Activated T-helper 2 cell treated with anti-CD3 and anti-CD28 coated beads, Interferon-gamma antibody, Interleukin-2, Interleukin-4, amounts not matched to agents 10 μg/mL and 5 μg/mL and 100 μg/mL, durations not matched to agents 14 hours and 24 hours and 36 hours (primary cell): ENCODE measurements at regions of chr2 and their contacts with region 1.

Region 1: DNA sequence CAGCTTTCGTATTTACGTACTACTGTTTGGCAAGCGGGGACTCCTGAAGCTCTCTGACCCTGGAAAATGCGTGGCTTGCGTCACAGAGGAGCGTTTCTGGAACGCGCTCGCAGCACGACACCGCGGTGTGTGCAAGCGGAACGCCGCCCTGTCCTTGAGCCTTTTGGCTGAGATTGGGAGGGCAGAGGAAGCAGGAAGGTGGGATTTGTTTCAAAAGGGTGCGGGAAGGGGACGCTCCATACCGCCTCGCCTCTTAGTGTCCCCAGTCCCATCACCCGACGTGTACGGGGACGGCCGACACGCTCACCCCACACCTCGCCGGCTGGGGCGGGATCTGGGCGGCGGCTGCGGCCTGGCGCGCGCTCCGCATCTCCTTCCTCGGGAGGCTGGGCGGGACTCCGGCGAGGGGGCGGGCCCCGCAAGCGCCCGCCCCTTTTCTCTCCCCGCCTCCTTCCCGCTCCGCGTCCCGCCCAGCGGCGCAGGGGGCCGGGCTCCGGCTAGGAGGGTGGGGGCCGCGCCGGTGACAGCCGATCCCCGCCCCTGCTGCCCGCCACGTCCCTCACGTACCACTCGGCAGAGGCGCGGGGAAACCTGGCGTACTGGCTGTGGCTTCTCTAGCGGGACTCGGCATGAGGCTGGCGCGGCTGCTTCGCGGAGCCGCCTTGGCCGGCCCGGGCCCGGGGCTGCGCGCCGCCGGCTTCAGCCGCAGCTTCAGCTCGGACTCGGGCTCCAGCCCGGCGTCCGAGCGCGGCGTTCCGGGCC is at the start of gene PDK1:
- DNase-seq: peak; percentile 89
- H3K4me3 Mint-ChIP-seq: peak within 1 kb of the TSS; percentile 93
- H3K27ac Mint-ChIP-seq: peak within 1 kb of the TSS; percentile 95
- H3K4me1 Mint-ChIP-seq: peaks cover 47% of the 10 kb centered on the region
- H3K27me3 Mint-ChIP-seq: peaks cover 7% of the 10 kb centered on the region
- total RNA-seq, gene PDK1: 38.9 and 44.9 TPM in 2 replicates

Region 2: GRCh38 chr2:170928824-170929685 is 1626.6 kb before region 1 on chr2 and contains the start of gene GORASP2:
- intact Hi-C with region 1: loop called (anchors 10 kb)
- DNase-seq: peak; percentile 98
- H3K4me3 Mint-ChIP-seq: peak within 1 kb of the TSS; percentile 92
- H3K27ac Mint-ChIP-seq: peak within 1 kb of the TSS; percentile 94
- H3K4me1 Mint-ChIP-seq: peaks cover 45% of the 10 kb centered on the region
- H3K27me3 Mint-ChIP-seq: no peaks in the 10 kb centered on the region
- total RNA-seq, gene GORASP2: 92.4 and 92.8 TPM in 2 replicates

Region 3: GRCh38 chr2:171687287-171688128 is 868.2 kb before region 1 on chr2 and contains the start of gene DYNC1I2:
- intact Hi-C with region 1: loop called (anchors 5 kb)
- DNase-seq: peak; percentile 72
- H3K4me3 Mint-ChIP-seq: peak within 1 kb of the TSS; percentile 81
- H3K27ac Mint-ChIP-seq: peak within 1 kb of the TSS; percentile 72
- H3K4me1 Mint-ChIP-seq: peaks cover 18% of the 10 kb centered on the region
- H3K27me3 Mint-ChIP-seq: peaks cover 19% of the 10 kb centered on the region
- total RNA-seq, gene DYNC1I2: 65.9 and 69.5 TPM in 2 replicates

Region 4: GRCh38 chr2:171754254-171754939 is 801.3 kb before region 1 on chr2:
- intact Hi-C with region 1: no loop called
- DNase-seq: no peak
- H3K4me3 Mint-ChIP-seq: no peak overlapping the region
- H3K27ac Mint-ChIP-seq: no peak overlapping the region
- H3K4me1 Mint-ChIP-seq: peaks cover 8% of the 10 kb centered on the region
- H3K27me3 Mint-ChIP-seq: no peaks in the 10 kb centered on the region

Region 5: DNA sequence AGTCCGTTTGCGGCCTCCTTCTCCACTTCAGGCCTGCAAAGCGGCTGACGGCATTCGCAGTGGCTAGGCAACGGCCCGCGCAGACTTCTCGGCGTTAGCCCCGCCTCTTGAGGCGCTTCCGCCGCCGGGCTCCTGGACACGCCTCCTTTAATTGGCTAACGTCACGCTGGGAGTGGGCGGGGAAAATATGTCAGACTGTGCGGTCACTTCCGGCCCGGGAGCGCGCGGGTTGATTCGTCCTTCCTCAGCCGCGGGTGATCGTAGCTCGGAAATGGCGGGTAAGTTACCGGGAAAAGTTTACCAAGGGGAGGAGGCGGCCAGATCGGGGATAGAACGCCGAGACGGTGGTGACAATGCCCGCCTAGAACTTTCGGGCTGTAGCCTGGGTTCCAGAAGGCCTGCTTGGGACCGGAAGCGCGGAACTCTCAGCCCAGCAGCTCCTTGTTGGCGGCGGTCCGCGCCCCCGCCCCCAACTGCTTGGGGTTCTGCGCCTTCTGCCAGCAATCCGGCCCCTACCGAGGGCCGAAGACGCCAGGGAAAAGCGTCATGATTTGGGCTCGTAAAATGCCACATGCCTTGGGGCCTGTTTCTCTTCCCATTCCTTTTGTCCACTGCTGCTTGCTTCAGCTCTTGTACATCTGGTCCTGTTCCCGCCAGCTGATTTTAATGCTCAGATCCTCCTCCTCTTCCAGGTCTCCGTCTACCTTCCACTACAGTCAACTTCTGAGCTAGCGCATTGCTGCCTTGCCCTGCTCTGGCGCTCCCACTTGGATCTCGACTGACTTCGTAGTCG is 633.3 kb before region 1 on chr2 and contains the start of gene HAT1:
- intact Hi-C with region 1: loop called (anchors 5 kb)
- DNase-seq: peak; percentile 97
- H3K4me3 Mint-ChIP-seq: peak within 1 kb of the TSS; percentile 94
- H3K27ac Mint-ChIP-seq: peak within 1 kb of the TSS; percentile 96
- H3K4me1 Mint-ChIP-seq: peaks cover 33% of the 10 kb centered on the region
- H3K27me3 Mint-ChIP-seq: peaks cover 2% of the 10 kb centered on the region
- total RNA-seq, gene HAT1: 67.4 and 70.1 TPM in 2 replicates

Region 6: GRCh38 chr2:172588931-172589330 is 33.2 kb after region 1 on chr2:
- intact Hi-C with region 1: loop called (anchors 2 kb)
- DNase-seq: no peak
- H3K4me3 Mint-ChIP-seq: no peak overlapping the region
- H3K27ac Mint-ChIP-seq: no peak overlapping the region
- H3K4me1 Mint-ChIP-seq: peaks cover 22% of the 10 kb centered on the region
- H3K27me3 Mint-ChIP-seq: no peaks in the 10 kb centered on the region

Region 7: DNA sequence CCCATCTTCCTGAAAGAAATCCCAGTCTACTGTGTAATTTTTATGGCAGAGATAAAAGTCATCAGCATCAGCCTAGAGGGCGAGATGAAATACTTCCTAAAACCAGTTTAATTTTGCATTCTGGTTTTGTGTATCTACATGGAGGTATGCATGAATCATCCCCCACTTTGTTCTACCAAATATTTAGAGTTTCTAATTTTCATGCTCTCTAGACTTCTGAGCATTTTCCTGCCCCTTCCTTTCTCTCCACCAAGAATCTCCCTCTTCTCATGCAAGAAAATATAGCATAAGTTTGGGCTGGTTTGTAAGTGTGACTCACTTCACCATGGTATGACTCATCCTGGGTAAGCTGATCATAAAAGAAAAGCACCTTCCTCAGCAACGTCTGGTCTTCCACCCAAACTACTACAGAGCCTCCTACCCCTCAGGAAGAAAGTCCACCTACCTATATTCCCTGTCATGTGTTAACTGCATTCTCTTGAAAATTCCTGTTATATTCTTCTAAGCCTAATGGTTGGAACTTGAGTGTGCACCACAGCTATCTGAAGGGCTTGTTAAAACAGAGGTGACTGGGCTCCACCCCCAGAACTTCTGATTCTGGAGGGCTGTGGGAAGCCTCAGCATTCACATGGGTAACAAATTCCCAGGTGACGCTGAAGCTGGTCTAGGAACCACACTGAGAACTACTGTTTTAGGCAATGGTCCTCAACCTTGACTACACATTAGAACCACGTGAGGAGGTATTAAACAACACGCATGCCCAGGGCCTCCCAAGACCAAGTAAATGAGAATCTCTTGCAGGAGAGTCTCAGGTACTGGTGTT is 142.5 kb after region 1 on chr2:
- intact Hi-C with region 1: loop called (anchors 10 kb)
- DNase-seq: no peak
- H3K4me3 Mint-ChIP-seq: no peak overlapping the region
- H3K27ac Mint-ChIP-seq: no peak overlapping the region
- H3K4me1 Mint-ChIP-seq: peaks cover 25% of the 10 kb centered on the region
- H3K27me3 Mint-ChIP-seq: peaks cover 4% of the 10 kb centered on the region